GM10248 (cell line): ENCODE measurements at regions of chr2 and their contacts with region 1.

Region 1: DNA sequence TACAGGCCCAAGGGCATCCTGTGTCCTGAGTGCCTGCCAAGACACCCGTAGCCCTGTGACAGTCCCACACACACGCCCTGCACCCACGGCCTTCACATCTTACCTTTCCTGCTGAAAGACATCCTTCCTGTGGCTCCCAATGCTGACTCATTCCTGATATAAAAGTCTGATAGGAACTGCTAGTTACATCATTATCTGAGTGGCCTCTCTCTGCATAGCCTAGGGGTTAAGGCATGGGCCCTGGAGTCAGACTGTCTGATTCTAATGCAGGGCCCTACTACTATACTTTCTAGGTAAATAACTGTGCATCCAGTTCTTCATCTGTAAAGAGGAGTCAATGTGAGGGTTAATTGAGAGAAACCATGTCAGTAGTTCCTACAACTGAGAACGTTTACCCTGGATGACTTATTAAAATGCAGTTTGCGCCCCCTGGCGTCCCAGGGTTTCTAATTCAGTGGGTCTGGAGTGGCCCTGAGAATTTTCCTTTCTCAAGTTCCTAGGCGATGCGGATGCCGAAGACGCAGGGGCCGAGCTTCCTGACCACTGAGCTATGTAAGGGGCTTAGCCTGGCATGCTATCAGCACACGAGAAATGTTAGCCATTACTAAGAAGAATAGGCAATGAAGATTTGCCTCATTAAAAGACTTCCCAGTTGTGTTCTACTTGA is 6.0 kb upstream of the GPR45 start:
- DNase-seq: peak; percentile 55
- CTCF ChIP-seq: peak; percentile 73

Region 2: DNA sequence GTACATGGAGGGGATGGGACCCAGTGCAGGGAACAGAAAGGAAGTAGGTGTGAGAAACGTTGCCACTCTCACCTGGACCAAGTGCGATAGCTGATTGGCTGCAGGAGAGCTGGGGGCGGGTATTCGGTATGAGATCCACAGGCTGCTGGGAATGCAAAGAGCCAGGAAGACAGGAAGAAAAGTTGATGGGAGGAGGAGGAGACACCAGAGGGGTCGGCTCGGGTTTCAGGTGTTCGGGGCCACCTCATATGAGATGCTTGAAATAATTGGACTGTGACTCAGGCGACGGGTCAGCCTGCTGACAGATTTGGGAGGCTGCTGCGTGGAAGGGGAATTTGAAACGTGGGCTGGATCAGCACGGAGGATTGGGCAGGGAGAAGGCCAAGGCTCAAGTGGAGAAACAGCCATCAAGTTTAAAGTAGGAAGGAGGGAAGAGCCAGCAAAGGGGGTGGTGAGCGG is 132.5 kb before region 1 on chr2:
- CTCF ChIA-PET with region 1: interaction called, 492 read pairs
- POLR2A ChIA-PET with region 1: no interaction called
- DNase-seq: no peak
- CTCF ChIP-seq: no peak

Region 3: GRCh38 chr2:105187531-105187930 is 48.0 kb before region 1 on chr2:
- CTCF ChIA-PET with region 1: no interaction called
- POLR2A ChIA-PET with region 1: no interaction called
- DNase-seq: no peak
- CTCF ChIP-seq: no peak